Activated T-helper 1 cell treated with anti-CD3 and anti-CD28 coated beads, Interleukin-12 subunit alpha, Interleukin-12 subunit beta, Interleukin-2, Interleukin-4 antibody, amounts not matched to agents 30 ng/mL and 10 ng/mL and 1 ng/mL, durations not matched to agents 14 hours and 24 hours and 36 hours (primary cell): ENCODE measurements at regions of chr9 and their contacts with region 1.

Region 1: GRCh38 chr9:132006677-132007370 is 72.8 kb downstream of the MED27 start:
- DNase-seq: peak; percentile 50
- H3K4me3 Mint-ChIP-seq: peak overlapping the region; percentile 58
- H3K27ac Mint-ChIP-seq: peak overlapping the region; percentile 62
- H3K4me1 Mint-ChIP-seq: peaks cover 66% of the 10 kb centered on the region
- H3K27me3 Mint-ChIP-seq: peaks cover 2% of the 10 kb centered on the region

Region 2: GRCh38 chr9:131910572-131910971 is 96.3 kb before region 1 on chr9:
- intact Hi-C with region 1: no loop called
- DNase-seq: no peak
- H3K4me3 Mint-ChIP-seq: no peak overlapping the region
- H3K27ac Mint-ChIP-seq: no peak overlapping the region
- H3K4me1 Mint-ChIP-seq: no peaks in the 10 kb centered on the region
- H3K27me3 Mint-ChIP-seq: peaks cover 2% of the 10 kb centered on the region

Region 3: DNA sequence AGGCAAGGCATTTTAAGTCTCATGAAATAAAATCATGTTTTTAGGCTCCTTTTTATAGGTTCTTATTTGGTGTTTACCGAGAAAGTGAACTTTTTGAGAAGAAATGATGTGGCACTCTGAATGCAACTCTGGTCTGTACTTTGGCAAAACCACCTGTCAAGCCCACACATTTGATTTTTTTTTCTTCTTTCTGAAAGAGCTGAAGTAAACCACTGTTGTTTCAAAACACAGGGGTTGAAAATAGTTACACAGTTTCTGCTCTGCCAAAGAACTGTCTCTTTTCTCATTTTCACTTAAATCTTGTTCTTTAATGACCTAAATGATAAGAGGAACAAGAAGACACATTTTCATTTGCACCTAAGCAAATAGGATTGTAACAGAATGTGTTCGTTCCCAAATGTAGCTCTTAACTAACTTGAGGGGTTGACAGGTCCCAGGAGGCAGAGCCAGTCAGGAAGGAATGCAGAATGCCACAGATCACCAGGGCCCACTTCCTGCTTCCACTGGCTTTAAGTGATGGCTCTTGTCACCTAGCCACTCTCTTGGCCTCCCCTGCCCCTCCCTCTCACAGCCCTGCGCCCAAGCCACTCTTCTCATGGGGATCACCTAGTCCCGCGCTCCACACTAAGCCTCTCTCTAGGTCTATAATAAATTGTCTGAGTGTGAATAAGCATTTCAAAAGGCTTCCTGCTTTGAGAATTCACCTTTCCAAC is 25.6 kb after region 1 on chr9:
- intact Hi-C with region 1: no loop called
- DNase-seq: no peak
- H3K4me3 Mint-ChIP-seq: no peak overlapping the region
- H3K27ac Mint-ChIP-seq: no peak overlapping the region
- H3K4me1 Mint-ChIP-seq: peaks cover 25% of the 10 kb centered on the region
- H3K27me3 Mint-ChIP-seq: no peaks in the 10 kb centered on the region

Region 4: GRCh38 chr9:132144708-132145365 is 138.0 kb after region 1 on chr9:
- intact Hi-C with region 1: loop called (anchors 1 kb)
- DNase-seq: peak; percentile 28
- H3K4me3 Mint-ChIP-seq: peak overlapping the region; percentile 19
- H3K27ac Mint-ChIP-seq: peak overlapping the region; percentile 78
- H3K4me1 Mint-ChIP-seq: peaks cover 38% of the 10 kb centered on the region
- H3K27me3 Mint-ChIP-seq: peaks cover 53% of the 10 kb centered on the region